Heart left ventricle (tissue), 16 donors: ENCODE measurements at regions of chr17 and their contacts with region 1.

Region 1: DNA sequence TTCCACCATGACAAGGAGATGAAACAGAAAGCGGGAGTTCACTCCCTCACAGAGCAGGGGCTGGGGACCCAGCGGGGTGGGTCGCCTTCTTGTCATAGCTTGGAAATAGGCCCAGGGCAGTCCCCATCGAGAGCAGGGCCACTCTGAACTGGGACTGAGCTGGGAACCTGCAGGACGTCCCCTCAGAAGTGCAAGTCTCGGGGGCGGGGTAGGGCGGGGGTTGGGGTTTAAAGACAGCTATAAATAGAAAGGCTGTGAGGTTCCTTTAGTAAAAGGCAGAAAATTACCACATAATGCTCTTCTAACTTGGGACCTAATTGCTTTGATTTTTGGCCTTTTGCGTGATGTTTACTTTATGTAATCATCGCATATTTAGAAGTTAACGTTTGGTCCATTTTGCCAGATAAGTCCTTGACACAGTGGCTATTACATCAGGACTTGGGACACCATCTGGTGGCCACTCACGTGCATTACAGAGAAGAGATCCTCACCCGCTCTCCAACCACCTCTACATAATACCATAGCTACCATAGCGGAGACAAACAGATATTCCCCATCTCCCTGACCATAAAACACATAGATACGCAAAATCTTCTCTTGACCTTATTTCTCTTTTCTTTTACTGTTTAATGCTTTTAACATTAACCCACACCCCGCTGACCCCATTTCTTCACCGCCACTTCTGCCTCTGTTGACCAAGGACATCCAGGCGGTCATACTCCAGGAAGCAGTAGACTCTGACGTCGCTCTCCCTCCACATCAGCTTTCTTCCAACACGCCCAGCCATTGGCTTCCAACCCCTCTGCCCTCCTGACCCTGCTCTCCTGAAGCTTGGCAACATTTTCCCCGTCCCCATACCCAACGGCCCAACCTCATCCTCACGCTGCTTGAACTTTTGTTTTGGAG is 27.5 kb upstream of the PIK3R6 start:
- DNase-seq: peak in 4 of 5 donors; percentile 40 to 65 (median 52)
- ATAC-seq: peak; percentile 79 to 85 (median 82)
- H3K4me3 ChIP-seq: peak overlapping the region in 5 of 12 donors; percentile 4 to 20 (median 17)
- H3K27ac ChIP-seq: no peak overlapping the region
- H3K4me1 ChIP-seq: peaks cover 0 to 28% (median 0%) of the 10 kb centered on the region in 12 donors
- H3K27me3 ChIP-seq: peaks cover 0 to 4% (median 0%) of the 10 kb centered on the region in 9 donors
- CTCF ChIP-seq: peak; percentile 78 to 90 (median 86)
- POLR2A ChIP-seq: no peak

Region 2: GRCh38 chr17:8409966-8410864 is 484.7 kb before region 1 on chr17:
- intact Hi-C with region 1: loop called in 1 of 10 experiments (anchors 10 kb)
- DNase-seq: peak; percentile 86 to 92 (median 88)
- ATAC-seq: peak; percentile 83 to 96 (median 94)
- H3K4me3 ChIP-seq: no peak overlapping the region
- H3K27ac ChIP-seq: no peak overlapping the region
- H3K4me1 ChIP-seq: peaks cover 0 to 10% (median 2%) of the 10 kb centered on the region in 12 donors
- H3K27me3 ChIP-seq: no peaks in the 10 kb centered on the region
- CTCF ChIP-seq: peak; percentile 85 to 93 (median 88)
- POLR2A ChIP-seq: no peak

Region 3: DNA sequence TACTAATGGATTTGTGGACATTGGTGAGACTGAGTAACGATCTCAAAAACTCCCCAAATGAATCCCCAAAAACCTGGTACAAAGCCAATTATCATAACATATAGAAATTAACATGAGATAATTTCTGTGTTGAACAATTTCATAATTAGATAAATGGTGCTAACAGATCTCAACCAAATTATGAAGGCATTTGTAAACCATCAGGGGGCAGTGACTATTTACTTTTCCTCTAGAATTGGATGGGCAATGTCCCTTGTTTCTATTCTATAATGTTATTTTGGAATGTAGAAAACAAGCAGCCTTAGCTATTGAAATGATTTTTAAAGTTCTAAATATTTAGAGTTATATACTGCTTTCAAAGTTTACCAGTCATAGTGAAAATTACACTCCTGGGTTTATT is 322.2 kb before region 1 on chr17:
- intact Hi-C with region 1: loop called in 2 of 10 experiments (anchors 5 to 10 kb)
- DNase-seq: no peak
- ATAC-seq: no peak
- H3K4me3 ChIP-seq: no peak overlapping the region
- H3K27ac ChIP-seq: no peak overlapping the region
- H3K4me1 ChIP-seq: no peaks in the 10 kb centered on the region
- H3K27me3 ChIP-seq: no peaks in the 10 kb centered on the region
- CTCF ChIP-seq: peak in 11 of 12 donors; percentile 18 to 60 (median 45)
- POLR2A ChIP-seq: no peak

Region 4: GRCh38 chr17:8753976-8754440 is 140.9 kb before region 1 on chr17:
- intact Hi-C with region 1: loop called in 1 of 10 experiments (anchors 5 kb)
- DNase-seq: no peak
- ATAC-seq: no peak
- H3K4me3 ChIP-seq: no peak overlapping the region
- H3K27ac ChIP-seq: no peak overlapping the region
- H3K4me1 ChIP-seq: no peaks in the 10 kb centered on the region
- H3K27me3 ChIP-seq: no peaks in the 10 kb centered on the region
- CTCF ChIP-seq: peak in 6 of 12 donors; percentile 6 to 29 (median 22)
- POLR2A ChIP-seq: no peak

Region 5: DNA sequence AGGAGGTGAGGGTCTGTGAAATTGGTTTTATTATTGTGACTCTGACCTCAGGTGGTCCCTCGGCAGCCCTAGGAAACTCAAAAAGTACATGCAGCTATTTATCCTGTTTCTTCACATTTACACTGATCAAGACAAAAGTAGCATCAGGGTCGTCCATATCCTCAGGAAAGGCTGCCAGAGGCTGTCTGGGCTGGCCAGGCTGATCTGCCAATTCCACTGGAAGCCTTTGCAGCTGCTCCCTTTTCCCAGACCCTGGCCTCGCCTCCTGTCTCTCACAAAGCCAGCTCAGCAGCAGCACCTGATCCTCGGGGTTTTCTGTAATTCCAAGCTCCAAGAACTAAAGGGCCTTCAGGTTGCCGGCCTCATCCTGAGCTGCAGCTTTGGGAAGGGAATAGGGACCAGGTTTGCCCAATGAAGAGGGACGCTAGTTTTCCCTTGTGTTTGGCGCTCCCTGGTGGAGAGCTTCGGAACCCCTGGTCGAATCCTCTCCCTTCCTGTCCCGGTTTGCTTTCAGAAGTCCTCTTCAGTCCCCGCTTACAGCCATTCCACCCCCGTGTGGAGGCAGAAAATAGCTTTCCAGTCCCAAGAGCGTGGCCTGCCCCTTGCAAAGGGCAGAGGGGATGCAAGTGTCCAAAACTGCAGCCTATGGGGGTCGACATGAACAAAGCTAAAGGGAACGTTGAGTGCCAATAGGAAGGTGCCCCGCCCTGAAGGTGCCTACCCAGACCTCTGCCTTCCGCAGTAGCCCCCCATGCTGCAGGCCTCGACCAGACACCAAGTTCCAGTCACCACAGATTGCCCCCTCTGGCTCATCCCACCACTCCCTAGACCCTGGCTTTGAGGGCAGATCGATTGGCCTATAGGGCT is 109.1 kb before region 1 on chr17:
- intact Hi-C with region 1: loop called in 2 of 10 experiments (anchors 5 kb)
- DNase-seq: peak; percentile 68 to 83 (median 76)
- ATAC-seq: peak in 3 of 4 donors; percentile 91 to 92 (median 91)
- H3K4me3 ChIP-seq: no peak overlapping the region
- H3K27ac ChIP-seq: no peak overlapping the region
- H3K4me1 ChIP-seq: peaks cover 0 to 20% (median 0%) of the 10 kb centered on the region in 12 donors
- H3K27me3 ChIP-seq: no peaks in the 10 kb centered on the region
- CTCF ChIP-seq: peak; percentile 72 to 91 (median 88)
- POLR2A ChIP-seq: no peak

Region 6: GRCh38 chr17:8806926-8807550 is 87.9 kb before region 1 on chr17:
- intact Hi-C with region 1: loop called in 6 of 10 experiments (anchors 5 to 10 kb)
- DNase-seq: no peak
- ATAC-seq: peak in 2 of 4 donors; percentile 38 to 47
- H3K4me3 ChIP-seq: no peak overlapping the region
- H3K27ac ChIP-seq: peak overlapping the region in 2 of 12 donors; percentile 23 to 81
- H3K4me1 ChIP-seq: peaks cover 0 to 16% (median 0%) of the 10 kb centered on the region in 12 donors
- H3K27me3 ChIP-seq: no peaks in the 10 kb centered on the region
- CTCF ChIP-seq: no peak
- POLR2A ChIP-seq: no peak

Region 7: GRCh38 chr17:8832711-8833352 is 62.1 kb before region 1 on chr17:
- intact Hi-C with region 1: loop called in 2 of 10 experiments (anchors 5 to 10 kb)
- DNase-seq: peak in 1 of 5 donors; percentile 70
- ATAC-seq: peak in 1 of 4 donors; percentile 26
- H3K4me3 ChIP-seq: no peak overlapping the region
- H3K27ac ChIP-seq: no peak overlapping the region
- H3K4me1 ChIP-seq: peaks cover 0 to 4% (median 0%) of the 10 kb centered on the region in 12 donors
- H3K27me3 ChIP-seq: peaks cover 0 to 16% (median 0%) of the 10 kb centered on the region in 9 donors
- CTCF ChIP-seq: peak in 11 of 12 donors; percentile 11 to 61 (median 44)
- POLR2A ChIP-seq: no peak